Left ventricle myocardium inferior (tissue), 1 donor: ENCODE measurements at regions of chr1 and their contacts with region 1.

Region 1: DNA sequence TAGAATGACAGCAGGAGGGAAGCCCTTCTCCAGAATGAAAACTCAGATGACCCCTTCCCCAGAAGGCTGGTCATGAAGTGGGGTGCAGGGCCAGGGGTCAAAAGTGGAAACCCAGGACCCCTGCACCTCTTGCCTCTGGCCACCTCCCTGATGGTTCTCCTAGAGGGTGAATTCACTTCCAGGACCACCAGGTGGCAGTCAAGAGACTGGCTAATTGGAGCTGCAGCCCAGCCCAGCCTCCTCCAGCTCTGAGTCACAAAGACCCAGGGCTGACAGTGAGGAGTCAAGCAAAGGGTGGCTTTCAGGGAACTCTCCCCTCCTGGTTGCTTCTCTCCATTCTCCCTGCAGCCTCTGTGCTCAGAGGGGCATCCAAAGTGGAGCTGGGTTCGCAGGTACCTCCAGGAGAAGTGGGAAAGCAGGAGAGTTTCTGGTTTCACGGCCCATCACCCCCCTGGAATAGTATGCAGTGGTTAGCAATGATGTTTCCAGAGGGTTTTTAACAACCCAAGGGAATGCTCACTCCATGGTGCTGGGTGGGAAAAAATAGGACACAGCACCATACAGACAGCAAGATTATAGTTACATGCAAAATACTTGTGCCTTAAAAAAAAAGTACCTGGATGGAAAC is 6.1 kb upstream of the EPHB2 start:
- DNase-seq: peak; percentile 72
- H3K4me3 ChIP-seq: no peak overlapping the region
- H3K27ac ChIP-seq: no peak overlapping the region
- H3K4me1 ChIP-seq: peaks cover under 1% of the 10 kb centered on the region
- H3K27me3 ChIP-seq: peaks cover 16% of the 10 kb centered on the region
- CTCF ChIP-seq: peak; percentile 92

Region 2: GRCh38 chr1:22889213-22889827 is 184.8 kb after region 1 on chr1:
- intact Hi-C with region 1: loop called (anchors 10 kb)
- DNase-seq: no peak
- H3K4me3 ChIP-seq: no peak overlapping the region
- H3K27ac ChIP-seq: no peak overlapping the region
- H3K4me1 ChIP-seq: no peaks in the 10 kb centered on the region
- H3K27me3 ChIP-seq: peaks cover 6% of the 10 kb centered on the region
- CTCF ChIP-seq: peak; percentile 80